ENCODE measurements at regions of chr12 and their contacts with region 1.

Region 1: GRCh38 chr12:74111688-74112360 is 425.8 kb upstream of the ATXN7L3B start:
- DNase-seq: peak; percentile 72
- ATAC-seq: peak; percentile 98
- H3K4me3 Mint-ChIP-seq: no peak overlapping the region
- H3K27ac Mint-ChIP-seq: no peak overlapping the region
- H3K4me1 Mint-ChIP-seq: no peaks in the 10 kb centered on the region
- H3K27me3 Mint-ChIP-seq: no peaks in the 10 kb centered on the region; the same call in 1 of the 2 replicates
- CTCF ChIP-seq: peak; percentile 65

Region 2: GRCh38 chr12:74076918-74077317 is 34.9 kb before region 1 on chr12:
- CTCF ChIA-PET with region 1: no interaction called
- POLR2A ChIA-PET with region 1: no interaction called
- DNase-seq: no peak
- ATAC-seq: no peak
- H3K4me3 Mint-ChIP-seq: no peak overlapping the region
- H3K27ac Mint-ChIP-seq: no peak overlapping the region
- H3K4me1 Mint-ChIP-seq: no peaks in the 10 kb centered on the region
- H3K27me3 Mint-ChIP-seq: no peaks in the 10 kb centered on the region
- CTCF ChIP-seq: no peak

Region 3: GRCh38 chr12:74317078-74317601 is 205.3 kb after region 1 on chr12:
- CTCF ChIA-PET with region 1: interaction called, 28 read pairs
- POLR2A ChIA-PET with region 1: no interaction called
- DNase-seq: no peak
- ATAC-seq: peak; percentile 99
- H3K4me3 Mint-ChIP-seq: no peak overlapping the region
- H3K27ac Mint-ChIP-seq: no peak overlapping the region
- H3K4me1 Mint-ChIP-seq: no peaks in the 10 kb centered on the region
- H3K27me3 Mint-ChIP-seq: no peaks in the 10 kb centered on the region
- CTCF ChIP-seq: 0 out of 2 replicates have a peak, but pooled peaks have one; percentile 25